Heart left ventricle (tissue), 16 donors: ENCODE measurements at regions of chr17 and their contacts with region 1.

Region 1: GRCh38 chr17:31015639-31016038 is 44.8 kb downstream of the RNF135 start:
- DNase-seq: no peak
- ATAC-seq: peak in 1 of 4 donors; percentile 54
- H3K4me3 ChIP-seq: no peak overlapping the region
- H3K27ac ChIP-seq: no peak overlapping the region
- H3K4me1 ChIP-seq: peaks cover 0 to 14% (median 2%) of the 10 kb centered on the region in 12 donors
- H3K27me3 ChIP-seq: no peaks in the 10 kb centered on the region
- CTCF ChIP-seq: peak in 5 of 12 donors; percentile 6 to 24 (median 13)
- POLR2A ChIP-seq: no peak

Region 2: GRCh38 chr17:30961209-30962188 is 54.1 kb before region 1 on chr17:
- intact Hi-C with region 1: no loop called
- DNase-seq: no peak
- ATAC-seq: peak in 3 of 4 donors; percentile 26 to 46 (median 40)
- H3K4me3 ChIP-seq: no peak overlapping the region
- H3K27ac ChIP-seq: peak overlapping the region in 2 of 12 donors; percentile 24 to 94
- H3K4me1 ChIP-seq: peaks cover 0 to 63% (median 4%) of the 10 kb centered on the region in 12 donors
- H3K27me3 ChIP-seq: no peaks in the 10 kb centered on the region
- CTCF ChIP-seq: no peak
- POLR2A ChIP-seq: no peak

Region 3: GRCh38 chr17:31216053-31216751 is 200.6 kb after region 1 on chr17:
- intact Hi-C with region 1: loop called (anchors 1 to 5 kb)
- DNase-seq: no peak
- ATAC-seq: no peak
- H3K4me3 ChIP-seq: no peak overlapping the region
- H3K27ac ChIP-seq: peak overlapping the region in 1 of 12 donors; percentile 19
- H3K4me1 ChIP-seq: peaks cover 0 to 10% (median 1%) of the 10 kb centered on the region in 12 donors
- H3K27me3 ChIP-seq: no peaks in the 10 kb centered on the region
- CTCF ChIP-seq: peak; percentile 47 to 79 (median 69)
- POLR2A ChIP-seq: no peak